Mammary epithelial cell (primary cell): ENCODE measurements at regions of chr22 and their contacts with region 1.

Region 1: GRCh38 chr22:50341977-50342650 is 1.0 kb upstream of the PPP6R2 start:
- DNase-seq: peak; percentile 75
- H3K4me3 ChIP-seq: peak overlapping the region; percentile 51 to 61 (median 55)
- H3K27ac ChIP-seq: no peak overlapping the region
- H3K4me1 ChIP-seq: peaks cover 7% of the 10 kb centered on the region
- H3K27me3 ChIP-seq: no peaks in the 10 kb centered on the region
- CTCF ChIP-seq: peak; percentile 99

Region 2: DNA sequence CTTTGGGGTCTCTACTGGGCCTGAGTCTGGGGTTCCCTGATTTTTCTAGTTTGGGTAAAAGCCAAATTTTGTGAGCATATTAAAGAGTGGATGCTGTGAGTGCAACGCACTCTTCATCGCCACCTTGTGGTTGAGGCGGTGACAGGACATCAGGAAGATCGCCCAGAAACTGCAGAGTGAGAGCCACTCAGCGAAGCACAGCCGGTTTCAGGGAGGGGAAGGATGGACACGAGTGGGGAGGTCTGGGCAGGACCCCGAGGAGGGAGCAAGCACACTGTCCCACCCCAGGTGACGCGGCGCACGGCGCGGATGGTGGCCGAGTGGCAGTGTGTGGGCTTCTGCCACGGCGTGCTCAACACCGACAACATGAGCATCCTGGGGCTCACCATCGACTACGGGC is 132.2 kb before region 1 on chr22:
- CTCF ChIA-PET with region 1: no interaction called
- dilution Hi-C with region 1: no loop called
- in situ Hi-C with region 1: no loop called
- intact Hi-C with region 1: no loop called
- DNase-seq: peak; percentile 37
- H3K4me3 ChIP-seq: no peak overlapping the region
- H3K27ac ChIP-seq: no peak overlapping the region
- H3K4me1 ChIP-seq: no peaks in the 10 kb centered on the region
- H3K27me3 ChIP-seq: no peaks in the 10 kb centered on the region
- CTCF ChIP-seq: peak; percentile 83 to 93

Region 3: GRCh38 chr22:50233223-50233622 is 108.9 kb before region 1 on chr22:
- CTCF ChIA-PET with region 1: no interaction called
- dilution Hi-C with region 1: no loop called
- in situ Hi-C with region 1: no loop called
- intact Hi-C with region 1: no loop called
- DNase-seq: no peak
- H3K4me3 ChIP-seq: no peak overlapping the region
- H3K27ac ChIP-seq: no peak overlapping the region
- H3K4me1 ChIP-seq: no peaks in the 10 kb centered on the region
- H3K27me3 ChIP-seq: no peaks in the 10 kb centered on the region
- CTCF ChIP-seq: no peak

Region 4: GRCh38 chr22:50244420-50245213 is 97.5 kb before region 1 on chr22 and contains the start of gene TUBGCP6:
- CTCF ChIA-PET with region 1: no interaction called
- dilution Hi-C with region 1: no loop called
- in situ Hi-C with region 1: no loop called
- intact Hi-C with region 1: loop called (anchors 1 kb)
- DNase-seq: peak; percentile 91
- H3K4me3 ChIP-seq: peak within 1 kb of the TSS; percentile 67 to 81 (median 69)
- H3K27ac ChIP-seq: peak within 1 kb of the TSS; percentile 69
- H3K4me1 ChIP-seq: peaks cover 23% of the 10 kb centered on the region
- H3K27me3 ChIP-seq: no peaks in the 10 kb centered on the region
- CTCF ChIP-seq: peak in 1 of 2 donors; percentile 28
- total RNA-seq, gene TUBGCP6: 33.0 to 34.0 TPM

Region 5: DNA sequence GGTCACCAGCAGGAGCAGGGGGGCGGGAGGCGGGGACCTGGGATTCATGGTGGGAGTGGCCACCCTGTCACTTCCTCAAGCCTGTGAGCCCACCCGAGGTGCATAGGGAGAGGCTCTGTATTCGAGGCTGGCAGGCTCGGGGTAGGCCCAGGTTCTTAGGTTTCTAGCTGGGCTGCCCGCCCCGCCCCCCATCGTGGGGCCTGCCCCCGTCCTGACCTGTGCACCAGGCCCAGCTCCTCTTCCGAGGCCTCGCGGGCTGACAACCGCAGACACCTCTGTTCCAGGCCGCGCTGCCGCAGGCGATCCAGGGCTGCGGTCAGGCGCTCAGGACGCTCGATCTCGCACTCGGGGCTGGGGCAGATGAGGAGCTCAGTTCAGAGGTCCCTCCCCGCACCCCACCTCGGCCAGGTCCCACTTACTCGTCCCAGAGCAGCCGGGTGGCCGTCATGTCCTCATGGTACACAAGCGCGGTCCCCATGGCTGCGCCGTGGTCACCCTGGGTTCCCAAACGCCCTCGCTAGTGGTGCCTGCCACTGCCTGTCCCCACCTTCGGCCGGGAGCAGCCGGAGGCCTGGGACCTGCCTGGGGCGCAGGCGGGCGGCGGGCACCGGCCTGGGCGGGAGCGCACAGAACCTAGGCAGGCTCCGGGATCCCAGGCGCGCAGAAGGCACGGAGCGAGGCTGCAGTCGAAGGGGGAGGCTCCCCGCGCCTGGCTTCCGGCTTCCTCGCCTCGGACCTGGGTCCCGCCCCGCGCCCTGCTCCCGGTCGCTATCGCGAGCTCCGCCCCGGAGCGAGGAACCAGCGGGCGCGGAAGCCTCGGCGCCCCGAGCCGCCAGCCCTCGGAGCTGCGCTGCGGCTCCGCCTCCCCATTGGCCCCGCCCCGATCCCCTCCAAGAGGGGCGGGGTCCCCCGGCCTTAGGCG is 91.3 kb before region 1 on chr22 and contains the start of gene HDAC10:
- CTCF ChIA-PET with region 1: interaction called, 5 read pairs
- dilution Hi-C with region 1: no loop called
- in situ Hi-C with region 1: loop called in 1 of 2 experiments (anchors 5 kb)
- intact Hi-C with region 1: loop called (anchors 1 kb)
- DNase-seq: peak; percentile 76
- H3K4me3 ChIP-seq: peak within 1 kb of the TSS; percentile 67 to 76 (median 73)
- H3K27ac ChIP-seq: no peak within 1 kb of the TSS
- H3K4me1 ChIP-seq: peaks cover 33% of the 10 kb centered on the region
- H3K27me3 ChIP-seq: no peaks in the 10 kb centered on the region
- CTCF ChIP-seq: no peak
- total RNA-seq, gene HDAC10: 10.7 to 23.6 TPM

Region 6: GRCh38 chr22:50276143-50276542 is 66.0 kb before region 1 on chr22:
- CTCF ChIA-PET with region 1: no interaction called
- dilution Hi-C with region 1: no loop called
- in situ Hi-C with region 1: no loop called
- intact Hi-C with region 1: loop called (anchors 1 kb)
- DNase-seq: no peak
- H3K4me3 ChIP-seq: no peak overlapping the region
- H3K27ac ChIP-seq: no peak overlapping the region
- H3K4me1 ChIP-seq: peaks cover 7% of the 10 kb centered on the region
- H3K27me3 ChIP-seq: no peaks in the 10 kb centered on the region
- CTCF ChIP-seq: peak; percentile 40 to 66

Region 7: DNA sequence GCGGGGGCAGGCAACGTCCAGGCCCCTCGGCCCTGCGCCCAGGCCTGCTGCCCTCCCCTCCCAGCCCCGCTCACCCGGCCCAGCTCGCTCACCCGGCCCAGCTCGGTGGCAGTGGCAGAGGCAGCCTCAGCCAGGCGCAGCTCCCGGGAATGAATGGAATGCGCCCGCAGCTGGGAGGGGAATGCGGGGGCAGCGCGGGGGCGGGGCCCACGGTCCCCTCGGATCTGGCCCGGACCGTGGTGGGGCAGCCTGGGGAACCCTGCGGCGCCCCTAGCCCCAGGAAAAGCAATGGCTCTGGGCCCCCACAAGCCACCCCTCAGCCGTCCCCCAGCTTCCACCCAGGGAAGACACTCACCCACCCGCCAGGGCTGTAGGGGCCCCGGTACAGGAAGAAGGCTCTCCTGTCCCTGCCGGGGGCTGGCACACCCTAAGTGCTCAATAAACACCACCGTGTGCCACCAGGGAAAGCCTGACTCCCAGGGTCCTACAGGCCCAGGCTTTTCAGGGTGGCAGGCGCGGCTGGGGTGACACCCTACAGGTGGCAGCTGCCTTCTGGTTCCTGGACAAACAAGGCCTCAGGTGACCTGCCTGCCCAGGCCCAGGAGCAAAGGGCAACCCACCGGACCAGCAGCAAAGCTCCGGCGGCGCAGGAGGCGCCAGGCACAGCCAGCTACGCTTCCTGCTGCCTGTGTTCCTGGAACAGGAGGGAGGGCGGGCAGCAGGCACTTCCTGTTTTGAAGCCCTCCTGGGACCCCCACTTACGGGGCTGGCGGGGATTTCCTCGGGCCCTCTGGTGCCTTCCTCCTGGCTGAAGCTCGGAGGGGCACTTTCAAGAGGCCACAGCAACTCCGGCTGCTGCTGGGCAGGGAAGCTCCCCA is 48.4 kb before region 1 on chr22:
- CTCF ChIA-PET with region 1: no interaction called
- dilution Hi-C with region 1: loop called (anchors 5 kb)
- in situ Hi-C with region 1: no loop called
- intact Hi-C with region 1: no loop called
- DNase-seq: peak; percentile 58
- H3K4me3 ChIP-seq: peak overlapping the region; percentile 15 to 43 (median 26)
- H3K27ac ChIP-seq: peak overlapping the region; percentile 49
- H3K4me1 ChIP-seq: peaks cover 49% of the 10 kb centered on the region
- H3K27me3 ChIP-seq: no peaks in the 10 kb centered on the region
- CTCF ChIP-seq: no peak

Region 8: GRCh38 chr22:50306753-50307749 is 35.1 kb before region 1 on chr22 and contains the start of gene PLXNB2:
- CTCF ChIA-PET with region 1: no interaction called
- dilution Hi-C with region 1: no loop called
- in situ Hi-C with region 1: no loop called
- intact Hi-C with region 1: no loop called
- DNase-seq: peak; percentile 65
- H3K4me3 ChIP-seq: peak within 1 kb of the TSS; percentile 71 to 79 (median 75)
- H3K27ac ChIP-seq: peak within 1 kb of the TSS; percentile 53
- H3K4me1 ChIP-seq: peaks cover 37% of the 10 kb centered on the region
- H3K27me3 ChIP-seq: no peaks in the 10 kb centered on the region
- CTCF ChIP-seq: no peak
- total RNA-seq, gene PLXNB2: 122 to 240 TPM

Region 9: DNA sequence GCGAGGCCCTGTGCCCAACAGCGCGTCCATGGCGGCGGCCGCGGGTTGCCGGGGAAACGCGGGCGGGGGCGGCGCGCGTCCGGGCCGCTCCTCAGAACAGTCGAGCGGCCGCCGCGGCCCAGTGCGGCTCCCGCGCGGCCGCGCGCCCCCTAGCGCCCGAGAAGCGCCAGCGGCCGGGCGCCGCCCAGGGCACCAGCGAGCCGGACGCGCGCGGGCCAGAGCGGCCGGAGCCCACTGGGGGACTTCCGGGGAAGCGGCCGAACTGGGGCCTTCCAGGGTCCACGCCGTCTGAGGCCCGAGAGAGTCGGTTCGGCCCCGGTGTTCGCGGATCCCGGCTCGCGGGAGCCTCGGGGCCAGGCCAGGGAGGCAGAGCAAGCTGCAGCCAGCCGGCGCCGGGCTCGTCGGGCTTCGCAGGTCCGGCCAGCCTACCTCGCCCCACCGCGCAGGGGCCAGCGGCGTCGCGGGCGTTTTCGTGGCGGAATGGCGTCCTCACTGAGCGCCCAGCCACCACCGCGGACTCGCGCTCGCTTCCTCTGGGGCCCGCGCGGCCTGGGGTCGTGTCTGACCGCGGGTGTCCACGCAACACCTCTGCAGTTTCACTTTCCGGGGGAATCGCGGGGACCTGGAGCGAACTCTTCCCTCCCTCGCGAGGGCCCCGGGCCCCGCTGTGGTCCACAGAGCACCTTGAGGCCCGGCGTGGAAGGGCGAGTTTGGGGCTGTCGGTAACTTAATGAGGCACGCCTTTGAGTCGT is 15.0 kb before region 1 on chr22 and contains the start of gene DENND6B:
- CTCF ChIA-PET with region 1: no interaction called
- dilution Hi-C with region 1: no loop called
- in situ Hi-C with region 1: no loop called
- intact Hi-C with region 1: loop called (anchors 2 kb)
- DNase-seq: peak; percentile 64
- H3K4me3 ChIP-seq: peak within 1 kb of the TSS; percentile 26 to 80 (median 77)
- H3K27ac ChIP-seq: peak within 1 kb of the TSS; percentile 54
- H3K4me1 ChIP-seq: peaks cover 13% of the 10 kb centered on the region
- H3K27me3 ChIP-seq: no peaks in the 10 kb centered on the region
- CTCF ChIP-seq: peak; percentile 40 to 45
- total RNA-seq, gene DENND6B: 2.0 to 3.4 TPM

Region 10: GRCh38 chr22:50498322-50498890 is 156.3 kb after region 1 on chr22:
- CTCF ChIA-PET with region 1: no interaction called
- dilution Hi-C with region 1: no loop called
- in situ Hi-C with region 1: no loop called
- intact Hi-C with region 1: loop called (anchors 10 kb)
- DNase-seq: peak; percentile 66
- H3K4me3 ChIP-seq: no peak overlapping the region
- H3K27ac ChIP-seq: no peak overlapping the region
- H3K4me1 ChIP-seq: no peaks in the 10 kb centered on the region
- H3K27me3 ChIP-seq: no peaks in the 10 kb centered on the region
- CTCF ChIP-seq: peak; percentile 81